GM10248 (cell line): ENCODE measurements at regions of chr12 and their contacts with region 1.

Region 1: DNA sequence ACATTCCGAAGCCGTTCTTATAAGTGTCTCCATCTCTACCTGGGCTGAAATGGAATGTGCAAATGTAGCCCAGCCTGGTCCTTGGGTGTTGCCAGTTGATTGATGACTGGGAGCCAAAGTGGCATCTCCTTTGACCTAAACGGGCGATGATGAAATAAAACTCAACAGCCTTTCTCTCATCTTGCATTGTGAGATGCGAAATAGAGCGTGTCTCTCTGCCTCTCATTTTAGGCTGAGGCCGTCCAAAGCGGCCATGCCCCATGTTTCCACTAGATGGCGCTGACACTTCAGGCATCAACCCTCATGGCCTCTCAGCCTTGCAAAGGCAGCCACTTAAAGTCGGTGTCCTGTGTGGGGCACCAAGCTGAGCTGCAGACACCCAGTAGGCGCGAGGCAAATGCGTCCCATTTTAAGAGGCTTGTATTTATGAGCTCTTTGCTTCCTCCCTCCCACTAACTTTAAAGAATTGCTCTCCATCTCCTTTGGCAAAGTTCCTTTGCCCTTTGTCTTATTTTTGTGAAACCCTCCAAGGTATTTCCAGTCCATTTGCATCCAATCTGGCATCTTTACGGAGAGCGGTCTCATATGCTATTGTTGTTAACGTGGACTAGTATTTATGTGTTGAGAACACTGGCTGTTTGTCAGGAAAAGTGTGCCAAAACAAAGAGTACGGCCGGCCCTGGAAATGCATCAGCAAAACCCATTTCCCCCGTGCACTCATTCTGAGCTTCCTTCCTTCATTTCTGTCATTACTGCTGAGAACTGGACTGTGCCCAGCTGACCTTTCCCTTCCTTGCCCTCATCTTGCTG is 25.0 kb downstream of the GPRC5A start:
- DNase-seq: peak; percentile 82
- CTCF ChIP-seq: peak; percentile 96

Region 2: GRCh38 chr12:12398026-12398859 is 518.1 kb before region 1 on chr12:
- CTCF ChIA-PET with region 1: no interaction called
- POLR2A ChIA-PET with region 1: no interaction called
- DNase-seq: no peak
- CTCF ChIP-seq: no peak

Region 3: DNA sequence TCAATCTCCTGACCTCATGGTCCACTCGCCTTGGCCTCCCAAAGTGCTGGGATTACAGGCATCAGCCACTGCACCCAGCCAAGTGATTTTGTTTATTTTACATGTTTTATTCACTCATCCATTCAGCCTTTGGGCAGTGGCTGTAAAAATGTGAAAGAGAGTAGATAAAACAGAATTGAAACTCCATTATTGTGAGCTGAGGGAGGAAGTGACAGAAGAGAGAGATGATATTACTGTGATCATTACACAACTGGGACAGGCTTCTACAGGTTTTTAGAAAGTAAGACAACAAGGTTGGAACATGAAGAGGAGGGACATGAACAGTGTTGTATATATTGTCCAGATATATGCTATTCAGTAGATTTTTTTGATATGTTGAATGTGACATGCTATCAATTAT is 279.7 kb before region 1 on chr12:
- CTCF ChIA-PET with region 1: no interaction called
- POLR2A ChIA-PET with region 1: no interaction called
- DNase-seq: peak; percentile 65
- CTCF ChIP-seq: no peak

Region 4: DNA sequence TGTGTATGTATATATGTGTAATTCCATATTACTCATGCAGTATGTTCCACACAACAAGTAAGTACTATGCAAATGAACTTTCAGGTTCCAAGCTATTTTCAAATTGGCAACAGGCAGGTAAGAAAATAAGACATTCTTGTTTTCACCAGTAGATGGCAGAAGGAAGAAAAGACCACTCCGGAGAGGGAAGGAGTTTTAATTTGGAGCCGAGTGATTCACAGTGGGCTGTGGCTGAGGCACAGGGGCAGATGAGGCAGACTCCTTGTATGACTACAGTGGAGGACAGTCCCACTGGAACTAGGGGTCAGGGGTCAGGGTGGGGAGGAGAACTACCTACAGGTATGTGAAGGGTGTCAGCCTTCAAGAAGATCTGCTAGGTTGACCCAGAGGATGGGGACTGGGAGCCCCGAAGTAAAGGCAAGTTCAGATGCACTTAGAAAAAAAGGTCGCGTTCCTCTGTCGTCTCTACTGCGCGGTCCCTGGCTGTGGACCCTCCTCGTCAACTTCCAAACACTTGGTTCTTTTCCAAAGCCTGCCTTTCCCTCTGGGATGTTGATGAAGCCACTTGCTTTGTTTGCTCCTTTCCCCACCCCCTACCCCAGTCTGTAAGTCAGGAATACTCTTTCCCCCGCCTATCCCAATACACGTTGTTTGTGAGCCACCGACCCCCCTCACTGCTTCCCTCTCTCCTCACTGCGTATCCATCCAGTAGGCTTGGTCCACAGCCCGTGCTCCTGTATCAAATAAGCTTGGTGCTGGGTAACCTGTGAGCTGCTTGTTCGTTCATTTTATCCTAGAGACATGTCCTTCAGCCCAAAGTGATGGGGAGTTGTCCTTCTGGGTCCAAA is 79.1 kb before region 1 on chr12:
- CTCF ChIA-PET with region 1: no interaction called
- POLR2A ChIA-PET with region 1: no interaction called
- DNase-seq: peak; percentile 54
- CTCF ChIP-seq: peak; percentile 44

Region 5: DNA sequence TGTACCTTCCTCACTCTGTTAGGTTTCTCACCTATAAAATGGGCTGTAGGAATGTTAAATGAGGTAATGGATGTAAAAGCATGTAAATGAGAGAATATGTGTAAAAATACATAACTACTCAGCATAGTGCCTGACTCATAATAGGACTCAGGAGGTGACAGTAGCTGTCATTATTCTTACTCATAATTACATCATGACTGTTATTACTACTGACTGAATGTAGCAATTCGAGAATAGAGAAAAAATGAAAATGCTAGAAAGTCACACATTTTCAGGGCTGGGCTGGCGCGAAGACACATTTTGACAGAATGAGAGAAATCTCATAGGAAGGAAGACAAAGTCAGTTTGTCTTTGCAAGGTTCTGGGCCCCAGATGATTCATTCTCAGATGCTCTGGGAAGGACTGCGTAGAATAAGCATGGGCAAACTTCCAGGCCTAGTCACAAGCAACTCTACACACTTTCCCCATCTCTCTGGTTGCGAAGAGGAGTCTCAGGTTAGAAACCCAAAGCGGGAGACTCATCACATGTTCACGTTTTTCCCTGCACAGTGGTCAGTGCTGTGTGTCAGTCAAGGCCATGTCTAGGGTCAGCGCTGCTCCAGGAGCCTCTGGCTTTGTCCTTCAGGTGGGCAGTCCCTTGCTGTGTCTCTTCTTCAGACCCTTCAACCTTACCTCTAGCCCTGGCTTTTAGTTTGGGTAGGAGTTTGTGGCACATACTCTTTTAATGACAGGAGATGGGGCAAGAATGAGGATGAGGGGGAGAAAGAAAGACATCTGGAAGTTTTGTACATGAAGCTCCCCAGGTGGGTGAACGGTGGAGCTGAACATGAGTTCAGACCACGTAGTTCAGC is 16.6 kb before region 1 on chr12:
- CTCF ChIA-PET with region 1: interaction called, 10 read pairs
- POLR2A ChIA-PET with region 1: no interaction called
- DNase-seq: peak; percentile 32
- CTCF ChIP-seq: no peak

Region 6: DNA sequence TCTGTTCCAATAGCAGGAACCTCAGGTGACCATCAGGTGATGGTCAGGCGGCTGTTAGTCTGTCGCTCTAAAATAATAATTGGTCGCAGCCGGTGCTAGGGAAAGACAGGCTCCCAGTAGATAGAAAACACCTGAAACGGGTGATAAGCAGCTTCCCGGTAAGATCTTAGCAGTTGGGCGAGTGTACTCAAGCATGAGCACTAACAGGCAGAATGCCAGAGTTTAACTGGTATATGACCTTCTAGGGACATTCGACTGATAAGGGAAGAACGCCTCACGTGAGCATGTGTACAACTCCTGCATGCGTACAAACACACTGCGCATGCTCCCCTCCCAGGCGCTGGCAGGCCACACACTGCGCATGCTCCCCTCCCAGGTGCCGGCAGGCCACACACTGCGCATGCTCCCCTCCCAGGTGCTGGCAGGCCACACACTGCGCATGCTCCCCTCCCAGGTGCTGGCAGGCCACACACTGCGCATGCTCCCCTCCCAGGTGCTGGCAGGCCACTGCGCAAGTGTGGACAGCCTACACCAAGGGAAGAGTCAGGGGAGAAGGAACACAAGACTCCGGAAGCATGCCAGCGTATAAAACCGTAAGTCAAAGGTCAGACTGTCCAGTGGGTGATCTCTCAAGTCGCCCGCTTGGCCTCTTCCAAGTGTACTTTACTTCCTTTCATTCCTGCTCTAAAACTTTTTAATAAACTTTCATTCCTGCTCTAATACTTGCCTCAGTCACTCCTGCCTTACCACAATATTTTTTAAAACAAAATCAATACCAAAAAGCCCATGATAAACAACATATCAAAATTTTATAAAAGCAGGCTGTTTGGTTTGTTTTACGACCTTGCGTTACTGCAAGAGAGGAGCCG is 11.1 kb after region 1 on chr12:
- CTCF ChIA-PET with region 1: interaction called, 13 read pairs
- POLR2A ChIA-PET with region 1: no interaction called
- DNase-seq: no peak
- CTCF ChIP-seq: no peak

Region 7: GRCh38 chr12:12943586-12944260 is 27.4 kb after region 1 on chr12:
- CTCF ChIA-PET with region 1: interaction called, 14 read pairs
- POLR2A ChIA-PET with region 1: no interaction called
- DNase-seq: no peak
- CTCF ChIP-seq: no peak

Region 8: DNA sequence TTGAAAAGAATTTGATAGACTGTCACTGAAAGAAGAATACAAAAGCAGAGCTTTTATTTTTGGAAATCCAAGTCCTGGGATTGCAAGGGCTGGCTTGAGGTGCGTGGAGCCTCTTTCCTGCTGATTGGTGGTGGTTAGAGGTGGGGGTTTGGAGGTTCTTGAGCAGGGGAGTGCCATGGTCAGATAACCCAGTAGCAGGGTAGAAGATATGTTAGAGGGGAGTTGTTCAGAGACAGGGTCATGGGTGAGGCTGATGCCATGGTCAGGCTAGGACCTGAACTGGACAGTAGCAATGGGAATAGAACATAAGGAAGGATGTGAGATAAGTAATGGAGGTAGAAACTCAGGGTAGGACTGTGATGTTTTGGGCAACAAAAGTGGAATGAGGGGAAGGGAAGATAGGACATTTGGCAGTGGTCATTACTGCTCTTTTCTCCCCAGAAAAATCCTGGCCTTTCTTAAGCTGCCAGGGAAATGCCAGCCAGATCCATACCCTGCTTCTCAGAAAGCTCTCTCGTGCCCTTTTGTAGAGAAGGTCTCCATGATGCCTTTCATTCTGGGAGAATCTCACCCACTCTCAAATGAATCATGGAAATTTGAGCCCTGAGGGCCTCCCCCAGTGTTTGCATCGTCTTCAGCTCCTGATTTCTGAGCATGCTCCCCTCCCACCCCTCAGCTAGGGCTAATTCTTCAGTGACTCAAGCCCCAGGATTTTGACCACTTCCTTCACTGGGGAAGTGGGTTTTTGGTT is 289.6 kb after region 1 on chr12:
- CTCF ChIA-PET with region 1: interaction called, 117 read pairs
- POLR2A ChIA-PET with region 1: no interaction called
- DNase-seq: no peak
- CTCF ChIP-seq: no peak